ENCODE measurements at regions of chr4 and their contacts with region 1.

Region 1: DNA sequence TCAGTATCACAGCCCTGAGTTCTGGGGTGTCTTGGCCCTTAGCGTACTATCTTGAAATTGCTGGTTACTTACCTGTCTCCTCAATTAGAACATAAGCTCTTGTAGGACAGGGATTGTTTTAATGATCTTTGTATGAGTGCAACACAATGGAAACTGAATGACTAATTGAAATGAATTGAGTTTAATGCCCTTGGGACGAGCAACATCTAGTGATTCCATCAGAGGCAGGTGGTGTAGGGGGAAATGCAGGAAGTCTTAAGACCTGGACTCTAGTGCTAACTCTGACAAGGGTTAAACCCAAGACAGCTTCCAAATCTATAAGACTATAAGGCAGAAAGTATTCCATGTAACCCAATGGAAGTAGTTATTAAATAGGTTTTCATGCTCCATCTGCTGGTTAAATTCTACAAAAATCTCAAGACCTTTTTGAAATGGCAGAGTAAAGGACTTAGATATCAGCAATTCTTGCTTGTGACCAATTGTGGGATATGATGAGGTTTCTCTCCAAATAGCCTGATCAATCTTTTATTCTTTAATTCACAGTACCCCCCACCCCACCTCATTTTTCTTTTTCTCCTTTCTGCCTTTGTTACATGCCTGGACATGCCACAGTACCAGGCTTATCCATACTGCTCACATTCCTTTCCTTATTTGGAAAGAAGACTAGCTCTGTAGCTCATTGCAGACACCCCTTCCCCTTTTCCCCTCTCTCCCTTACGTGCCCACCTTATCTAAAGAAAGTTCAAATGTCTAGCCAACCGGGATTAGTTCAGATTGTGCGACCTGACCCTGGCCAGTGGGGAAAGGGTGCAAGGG is 340.8 kb downstream of the PAPSS1 start:
- DNase-seq: peak; percentile 12
- H3K4me3 ChIP-seq: no peak overlapping the region
- CTCF ChIP-seq: peak; percentile 7

Region 2: GRCh38 chr4:107094332-107094731 is 284.9 kb before region 1 on chr4:
- CTCF ChIA-PET with region 1: interaction called, 10 read pairs
- POLR2A ChIA-PET with region 1: no interaction called
- DNase-seq: no peak
- H3K4me3 ChIP-seq: no peak overlapping the region
- CTCF ChIP-seq: peak; percentile 49